Caco-2 (cell line): ENCODE measurements at regions of chr20 and their contacts with region 1.

Region 1: DNA sequence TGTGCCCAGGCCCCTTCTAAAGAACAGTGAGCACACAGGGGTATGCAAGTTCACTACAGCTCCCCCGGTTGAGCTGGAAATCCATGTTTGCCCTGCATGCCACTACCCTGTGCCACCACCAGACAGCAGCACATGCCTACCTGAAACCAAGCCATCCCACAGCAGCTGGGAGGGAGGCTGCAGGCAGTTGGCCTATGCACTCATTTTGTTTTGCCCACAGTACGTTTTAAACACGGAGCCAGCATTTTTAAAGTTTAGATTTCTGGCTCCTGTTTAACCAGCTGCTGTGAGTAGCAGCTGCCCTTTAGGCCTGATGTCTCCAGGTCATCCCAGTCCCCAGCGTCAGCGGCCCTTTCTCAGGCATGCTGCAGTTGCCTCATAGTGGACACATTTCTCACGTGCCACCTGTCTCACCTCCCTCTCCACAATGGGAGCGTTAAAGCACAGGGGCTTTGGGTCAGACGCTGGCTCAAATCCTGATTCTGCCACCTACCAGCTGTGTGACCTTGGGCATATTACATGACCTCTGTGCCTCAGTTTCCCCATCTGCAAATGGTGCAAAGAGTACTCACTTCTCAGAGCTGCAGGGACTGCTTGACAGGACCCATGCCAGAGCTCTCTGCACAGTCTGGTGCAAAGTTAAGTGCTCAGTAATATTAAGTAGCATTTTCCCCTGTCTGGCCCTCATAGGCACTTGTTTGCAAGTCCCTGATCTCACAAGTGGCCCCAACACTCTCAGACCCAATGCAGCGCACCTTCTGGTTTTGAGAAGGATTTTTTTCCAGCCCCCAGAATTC is 8.1 kb upstream of the UBE2V1 start:
- DNase-seq: peak; percentile 86 to 88
- H3K4me3 ChIP-seq: no peak overlapping the region
- H3K4me3 Mint-ChIP-seq: no peak overlapping the region
- H3K27ac Mint-ChIP-seq: peak overlapping the region; percentile 27
- H3K4me1 ChIP-seq: peaks cover 15% of the 10 kb centered on the region
- H3K4me1 Mint-ChIP-seq: peaks cover 18% of the 10 kb centered on the region
- H3K27me3 ChIP-seq: no peaks in the 10 kb centered on the region
- H3K27me3 Mint-ChIP-seq: no peaks in the 10 kb centered on the region
- CTCF ChIP-seq: peak; percentile 98 to 99

Region 2: DNA sequence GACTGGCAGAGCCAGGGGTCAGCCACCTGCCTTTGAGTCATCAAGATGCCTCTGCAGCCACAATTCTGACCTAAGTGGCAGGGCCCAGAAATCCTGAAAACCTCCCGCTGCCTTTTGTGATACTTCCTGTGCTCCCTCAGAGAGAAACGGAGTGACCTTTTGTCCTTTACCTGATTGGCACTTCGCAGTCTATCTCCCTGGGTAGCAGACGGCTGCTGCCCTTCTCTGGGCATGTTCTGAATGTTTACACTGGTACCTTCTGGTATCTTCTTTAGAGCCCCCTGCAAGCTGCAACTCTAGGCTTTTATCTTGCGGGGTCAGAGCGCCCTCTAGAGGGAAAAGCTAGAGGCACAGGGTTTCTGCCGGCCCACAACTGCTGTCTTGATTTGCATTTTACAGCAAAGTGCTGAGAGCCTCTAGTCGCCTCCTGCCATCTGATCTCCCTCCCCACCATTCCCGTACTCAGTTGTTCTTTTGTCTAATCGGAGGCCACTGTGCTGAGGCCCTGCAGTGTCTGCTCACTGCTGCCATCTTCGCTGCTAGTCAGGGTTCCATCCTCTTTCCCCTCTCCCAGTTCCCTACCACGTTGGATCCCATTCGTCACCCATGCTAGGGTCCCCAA is 232.6 kb before region 1 on chr20:
- CTCF ChIA-PET with region 1: no interaction called
- POLR2A ChIA-PET with region 1: no interaction called
- intact Hi-C with region 1: no loop called
- DNase-seq: peak; percentile 76 to 84
- H3K4me3 ChIP-seq: no peak overlapping the region
- H3K4me3 Mint-ChIP-seq: no peak overlapping the region
- H3K27ac Mint-ChIP-seq: peak overlapping the region; percentile 14
- H3K4me1 ChIP-seq: no peaks in the 10 kb centered on the region
- H3K4me1 Mint-ChIP-seq: peaks cover 15% of the 10 kb centered on the region
- H3K27me3 ChIP-seq: no peaks in the 10 kb centered on the region
- H3K27me3 Mint-ChIP-seq: no peaks in the 10 kb centered on the region
- CTCF ChIP-seq: peak; percentile 98 to 99

Region 3: DNA sequence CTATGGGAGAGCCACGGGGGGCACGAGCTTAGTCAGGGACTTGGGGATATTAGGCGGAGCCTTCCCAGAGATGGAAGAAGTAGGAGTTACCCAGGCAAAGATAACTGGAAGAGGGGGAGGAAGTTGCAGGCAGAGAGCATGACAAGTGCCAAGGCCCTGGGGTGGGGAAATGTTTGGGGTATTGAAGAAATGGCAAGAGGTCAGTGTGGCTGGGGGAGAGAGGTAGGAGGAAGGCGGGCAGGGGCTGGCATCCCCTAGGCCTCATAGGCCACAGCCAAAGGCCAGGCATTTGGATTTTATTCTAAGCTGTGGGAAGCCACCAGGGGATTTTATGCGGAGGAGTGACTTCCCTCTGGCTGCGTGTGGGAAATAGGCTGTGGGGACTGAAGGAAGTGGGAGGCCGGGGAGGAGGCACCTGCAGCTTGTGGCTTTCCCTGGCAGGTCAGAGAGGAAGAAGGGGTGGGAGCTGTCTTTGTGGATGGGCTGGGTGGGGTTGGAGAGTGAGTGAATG is 115.6 kb before region 1 on chr20:
- CTCF ChIA-PET with region 1: no interaction called
- POLR2A ChIA-PET with region 1: no interaction called
- intact Hi-C with region 1: no loop called
- DNase-seq: no peak
- H3K4me3 ChIP-seq: no peak overlapping the region
- H3K4me3 Mint-ChIP-seq: no peak overlapping the region
- H3K27ac Mint-ChIP-seq: no peak overlapping the region
- H3K4me1 ChIP-seq: peaks cover 4% of the 10 kb centered on the region; the same call in 1 of the 2 replicates
- H3K4me1 Mint-ChIP-seq: peaks cover 6% of the 10 kb centered on the region
- H3K27me3 ChIP-seq: no peaks in the 10 kb centered on the region
- H3K27me3 Mint-ChIP-seq: no peaks in the 10 kb centered on the region
- CTCF ChIP-seq: no peak

Region 4: GRCh38 chr20:50020288-50020687 is 100.8 kb before region 1 on chr20:
- CTCF ChIA-PET with region 1: no interaction called
- POLR2A ChIA-PET with region 1: no interaction called
- intact Hi-C with region 1: no loop called
- DNase-seq: no peak
- H3K4me3 ChIP-seq: no peak overlapping the region
- H3K4me3 Mint-ChIP-seq: no peak overlapping the region
- H3K27ac Mint-ChIP-seq: no peak overlapping the region
- H3K4me1 ChIP-seq: peaks cover 12% of the 10 kb centered on the region
- H3K4me1 Mint-ChIP-seq: peaks cover 8% of the 10 kb centered on the region
- H3K27me3 ChIP-seq: no peaks in the 10 kb centered on the region
- H3K27me3 Mint-ChIP-seq: no peaks in the 10 kb centered on the region
- CTCF ChIP-seq: no peak

Region 5: DNA sequence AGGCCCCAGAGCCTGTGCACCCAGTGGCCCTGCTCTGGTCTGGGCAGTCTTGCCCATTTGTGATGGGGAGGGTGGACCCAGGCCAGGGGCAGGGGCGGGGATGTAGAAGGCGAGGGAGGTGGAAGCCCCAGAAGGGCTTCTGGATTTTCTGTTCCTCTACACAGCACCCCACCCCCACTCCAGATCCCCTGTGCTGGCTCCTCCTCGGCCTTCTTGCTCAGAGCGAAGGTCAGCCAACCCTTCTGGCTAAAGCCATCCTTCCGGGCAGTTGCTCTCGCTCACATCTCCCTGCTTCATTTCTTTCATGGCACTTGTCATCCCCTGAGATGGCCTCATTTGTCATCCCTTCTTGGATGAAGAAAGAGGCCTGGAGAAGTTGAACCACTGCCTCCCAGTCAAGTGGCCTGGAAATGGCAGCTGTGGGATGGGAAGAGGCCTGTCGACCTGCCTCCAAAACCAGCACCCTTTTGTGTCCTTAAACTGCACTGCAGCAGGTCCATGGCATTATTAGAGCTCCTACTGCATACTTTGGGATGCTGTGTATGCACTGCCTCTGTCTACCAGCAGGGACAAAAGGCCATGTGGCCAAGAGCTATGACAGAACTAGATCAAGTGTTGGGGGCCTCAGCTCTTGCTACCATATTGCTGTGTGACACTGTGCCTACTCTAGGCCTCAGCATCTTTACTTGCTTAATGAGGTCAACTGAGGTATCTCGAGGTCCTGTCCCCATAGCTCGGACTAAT is 12.6 kb after region 1 on chr20:
- CTCF ChIA-PET with region 1: interaction called, 10 read pairs
- POLR2A ChIA-PET with region 1: interaction called, 3 read pairs
- intact Hi-C with region 1: no loop called
- DNase-seq: no peak
- H3K4me3 ChIP-seq: no peak overlapping the region
- H3K4me3 Mint-ChIP-seq: no peak overlapping the region
- H3K27ac Mint-ChIP-seq: no peak overlapping the region
- H3K4me1 ChIP-seq: peaks cover 26% of the 10 kb centered on the region
- H3K4me1 Mint-ChIP-seq: peaks cover 7% of the 10 kb centered on the region
- H3K27me3 ChIP-seq: no peaks in the 10 kb centered on the region
- H3K27me3 Mint-ChIP-seq: no peaks in the 10 kb centered on the region
- CTCF ChIP-seq: peak; percentile 31 to 56

Region 6: GRCh38 chr20:50144362-50144761 is 23.3 kb after region 1 on chr20:
- CTCF ChIA-PET with region 1: interaction called, 10 read pairs
- POLR2A ChIA-PET with region 1: interaction called, 6 read pairs
- intact Hi-C with region 1: no loop called
- DNase-seq: peak in 1 of 2 experiments; percentile 58
- H3K4me3 ChIP-seq: no peak overlapping the region
- H3K4me3 Mint-ChIP-seq: no peak overlapping the region
- H3K27ac Mint-ChIP-seq: no peak overlapping the region
- H3K4me1 ChIP-seq: peaks cover 11% of the 10 kb centered on the region
- H3K4me1 Mint-ChIP-seq: peaks cover 43% of the 10 kb centered on the region
- H3K27me3 ChIP-seq: no peaks in the 10 kb centered on the region
- H3K27me3 Mint-ChIP-seq: no peaks in the 10 kb centered on the region
- CTCF ChIP-seq: no peak

Region 7: GRCh38 chr20:50153485-50154377 is 32.6 kb after region 1 on chr20 and contains the start of gene PEDS1:
- CTCF ChIA-PET with region 1: interaction called, 91 read pairs
- POLR2A ChIA-PET with region 1: interaction called, 57 read pairs
- intact Hi-C with region 1: loop called (anchors 1 kb)
- DNase-seq: peak; percentile 95 to 99
- H3K4me3 ChIP-seq: peak within 1 kb of the TSS; percentile 96
- H3K4me3 Mint-ChIP-seq: peak within 1 kb of the TSS; percentile 82
- H3K27ac Mint-ChIP-seq: peak within 1 kb of the TSS; percentile 91
- H3K4me1 ChIP-seq: peaks cover 32% of the 10 kb centered on the region
- H3K4me1 Mint-ChIP-seq: peaks cover 45% of the 10 kb centered on the region
- H3K27me3 ChIP-seq: no peaks in the 10 kb centered on the region
- H3K27me3 Mint-ChIP-seq: no peaks in the 10 kb centered on the region
- CTCF ChIP-seq: peak; percentile 0 to 5
- total RNA-seq, gene PEDS1: 78.3 and 84.1 TPM in 2 replicates

Region 8: GRCh38 chr20:50172347-50173013 is 51.4 kb after region 1 on chr20:
- CTCF ChIA-PET with region 1: interaction called, 82 read pairs
- POLR2A ChIA-PET with region 1: interaction called, 26 read pairs
- intact Hi-C with region 1: loop called (anchors 1 kb)
- DNase-seq: peak; percentile 99
- H3K4me3 ChIP-seq: peak overlapping the region; percentile 47
- H3K4me3 Mint-ChIP-seq: peak overlapping the region; percentile 70
- H3K27ac Mint-ChIP-seq: peak overlapping the region; percentile 48
- H3K4me1 ChIP-seq: peaks cover 18% of the 10 kb centered on the region
- H3K4me1 Mint-ChIP-seq: peaks cover 13% of the 10 kb centered on the region
- H3K27me3 ChIP-seq: no peaks in the 10 kb centered on the region
- H3K27me3 Mint-ChIP-seq: no peaks in the 10 kb centered on the region
- CTCF ChIP-seq: peak in 1 of 2 experiments; percentile 0

Region 9: GRCh38 chr20:50179507-50180016 is 58.5 kb after region 1 on chr20:
- CTCF ChIA-PET with region 1: interaction called, 55 read pairs
- POLR2A ChIA-PET with region 1: interaction called, 3 read pairs
- intact Hi-C with region 1: no loop called
- DNase-seq: no peak
- H3K4me3 ChIP-seq: no peak overlapping the region
- H3K4me3 Mint-ChIP-seq: no peak overlapping the region
- H3K27ac Mint-ChIP-seq: peak overlapping the region; percentile 14
- H3K4me1 ChIP-seq: no peaks in the 10 kb centered on the region
- H3K4me1 Mint-ChIP-seq: peaks cover 7% of the 10 kb centered on the region
- H3K27me3 ChIP-seq: no peaks in the 10 kb centered on the region
- H3K27me3 Mint-ChIP-seq: no peaks in the 10 kb centered on the region
- CTCF ChIP-seq: peak in 1 of 2 experiments; percentile 50

Region 10: GRCh38 chr20:50399917-50400704 is 279.0 kb after region 1 on chr20:
- CTCF ChIA-PET with region 1: no interaction called
- POLR2A ChIA-PET with region 1: no interaction called
- intact Hi-C with region 1: no loop called
- DNase-seq: peak; percentile 72 to 76
- H3K4me3 ChIP-seq: no peak overlapping the region
- H3K4me3 Mint-ChIP-seq: no peak overlapping the region
- H3K27ac Mint-ChIP-seq: peak overlapping the region; percentile 70
- H3K4me1 ChIP-seq: peaks cover 35% of the 10 kb centered on the region
- H3K4me1 Mint-ChIP-seq: peaks cover 32% of the 10 kb centered on the region
- H3K27me3 ChIP-seq: no peaks in the 10 kb centered on the region
- H3K27me3 Mint-ChIP-seq: no peaks in the 10 kb centered on the region
- CTCF ChIP-seq: no peak